Activated CD4-positive, alpha-beta T cell treated with anti-CD3 and anti-CD28 coated beads for 36 hours (primary cell): ENCODE measurements at regions of chr12 and their contacts with region 1.

Region 1: GRCh38 chr12:100200463-100201181 is at the start of gene ACTR6:
- DNase-seq: peak; percentile 98
- ATAC-seq: peak; percentile 84
- H3K4me3 Mint-ChIP-seq: peak within 1 kb of the TSS; percentile 93
- H3K27ac Mint-ChIP-seq: peak within 1 kb of the TSS; percentile 100
- H3K4me1 Mint-ChIP-seq: peaks cover 26% of the 10 kb centered on the region
- H3K27me3 Mint-ChIP-seq: no peaks in the 10 kb centered on the region
- total RNA-seq, gene ACTR6: 21.6 to 37.3 TPM

Region 2: GRCh38 chr12:98644711-98645402 is 1555.8 kb before region 1 on chr12 and contains the starts of genes APAF1 and IKBIP:
- CTCF ChIA-PET with region 1: no interaction called
- POLR2A ChIA-PET with region 1: interaction called, 5 read pairs
- intact Hi-C with region 1: loop called in 1 of 2 experiments (anchors 2 kb)
- DNase-seq: peak; percentile 98
- ATAC-seq: peak; percentile 92
- H3K4me3 Mint-ChIP-seq: peak within 1 kb of the TSS; percentile 91
- H3K27ac Mint-ChIP-seq: peak within 1 kb of the TSS; percentile 94
- H3K4me1 Mint-ChIP-seq: peaks cover 16% of the 10 kb centered on the region
- H3K27me3 Mint-ChIP-seq: no peaks in the 10 kb centered on the region
- total RNA-seq, gene APAF1: 16.5 to 17.4 TPM
- total RNA-seq, gene IKBIP: 20.1 to 27.0 TPM

Region 3: GRCh38 chr12:99984271-99985128 is 216.1 kb before region 1 on chr12 and contains the start of gene ANKS1B:
- CTCF ChIA-PET with region 1: no interaction called
- POLR2A ChIA-PET with region 1: no interaction called
- intact Hi-C with region 1: loop called in 1 of 2 experiments (anchors 5 kb)
- DNase-seq: peak; percentile 50
- ATAC-seq: peak; percentile 85
- H3K4me3 Mint-ChIP-seq: peak within 1 kb of the TSS; percentile 47
- H3K27ac Mint-ChIP-seq: no peak within 1 kb of the TSS
- H3K4me1 Mint-ChIP-seq: peaks cover 6% of the 10 kb centered on the region
- H3K27me3 Mint-ChIP-seq: peaks cover 43% of the 10 kb centered on the region
- total RNA-seq, gene ANKS1B: 0.19 to 0.73 TPM

Region 4: GRCh38 chr12:100163416-100164152 is 37.0 kb before region 1 on chr12:
- CTCF ChIA-PET with region 1: interaction called, 3 read pairs
- POLR2A ChIA-PET with region 1: interaction called, 3 read pairs
- intact Hi-C with region 1: loop called in 1 of 2 experiments (anchors 5 kb)
- DNase-seq: peak; percentile 85
- ATAC-seq: peak; percentile 100
- H3K4me3 Mint-ChIP-seq: peak overlapping the region; percentile 49
- H3K27ac Mint-ChIP-seq: no peak overlapping the region
- H3K4me1 Mint-ChIP-seq: peaks cover 10% of the 10 kb centered on the region
- H3K27me3 Mint-ChIP-seq: no peaks in the 10 kb centered on the region

Region 5: DNA sequence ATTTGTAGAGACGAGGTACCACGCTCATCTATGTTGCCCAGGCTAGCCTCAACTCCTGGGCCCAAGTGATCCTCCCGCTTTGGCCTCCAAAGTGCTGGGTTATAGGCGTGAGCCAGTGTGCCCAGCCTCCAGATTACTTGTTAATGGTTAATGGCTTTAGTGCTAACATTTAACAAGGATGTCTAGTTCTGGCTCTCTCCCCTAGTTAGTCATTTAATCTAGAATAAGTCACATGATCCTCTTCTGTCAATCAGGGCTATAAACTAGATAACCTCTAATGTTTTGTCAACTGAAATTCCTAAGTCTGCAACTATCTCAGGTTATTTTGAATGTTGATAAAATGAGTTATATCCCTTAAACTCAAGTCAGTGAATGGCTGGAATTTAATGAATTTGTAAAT is 15.7 kb after region 1 on chr12:
- CTCF ChIA-PET with region 1: no interaction called
- POLR2A ChIA-PET with region 1: no interaction called
- intact Hi-C with region 1: no loop called
- DNase-seq: no peak
- ATAC-seq: no peak
- H3K4me3 Mint-ChIP-seq: no peak overlapping the region
- H3K27ac Mint-ChIP-seq: no peak overlapping the region
- H3K4me1 Mint-ChIP-seq: peaks cover 4% of the 10 kb centered on the region
- H3K27me3 Mint-ChIP-seq: no peaks in the 10 kb centered on the region